Activated B cell treated with CpG ODN at 0.5 μM for 24 hours (primary cell): ENCODE measurements at regions of chr2 and their contacts with region 1.

Region 1: DNA sequence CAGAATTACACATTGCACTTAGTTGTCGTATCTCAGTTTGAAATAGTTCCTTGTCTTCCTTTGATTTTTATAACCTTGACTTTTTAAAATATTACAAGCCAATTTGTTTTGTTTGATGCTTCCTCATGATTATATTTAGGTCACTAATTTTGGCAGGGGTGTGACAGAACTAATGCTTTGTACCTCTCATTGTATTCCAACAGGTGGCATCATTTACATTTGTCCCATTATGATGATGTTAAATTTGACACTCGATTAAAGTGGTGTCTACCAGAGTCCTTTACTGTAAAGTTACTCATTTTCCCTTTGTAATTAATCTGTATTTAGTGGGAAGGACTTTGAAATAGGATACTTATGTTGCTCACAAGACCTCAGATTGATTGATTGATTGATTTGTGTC is 21.5 kb upstream of the MFSD2B start:
- DNase-seq: no peak
- ATAC-seq: no peak
- H3K4me3 Mint-ChIP-seq: no peak overlapping the region
- H3K27ac Mint-ChIP-seq: no peak overlapping the region
- H3K4me1 Mint-ChIP-seq: no peaks in the 10 kb centered on the region
- H3K27me3 Mint-ChIP-seq: no peaks in the 10 kb centered on the region
- CTCF ChIP-seq: no peak

Region 2: DNA sequence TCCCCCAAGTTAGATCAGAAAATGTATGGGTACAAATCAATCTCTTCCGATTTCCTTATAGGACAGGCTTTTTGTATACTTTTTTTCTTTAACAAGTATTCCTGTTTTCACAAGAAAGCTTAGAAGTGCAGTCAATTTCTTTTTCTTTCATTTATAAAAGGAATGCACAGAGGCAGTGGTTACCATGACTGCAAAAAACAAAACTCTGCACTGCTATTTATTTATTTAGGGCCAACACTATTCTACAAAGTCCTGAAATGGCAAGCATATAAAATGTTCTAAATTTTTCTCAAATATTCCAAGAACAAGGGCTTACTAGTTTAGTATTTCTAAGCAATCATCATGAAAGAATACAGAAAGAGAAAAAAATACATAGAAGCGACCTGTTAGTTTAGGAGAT is 83.7 kb before region 1 on chr2:
- CTCF ChIA-PET with region 1: no interaction called
- POLR2A ChIA-PET with region 1: interaction called, 10 read pairs
- intact Hi-C with region 1: no loop called
- DNase-seq: no peak
- ATAC-seq: no peak
- H3K4me3 Mint-ChIP-seq: no peak overlapping the region
- H3K27ac Mint-ChIP-seq: no peak overlapping the region
- H3K4me1 Mint-ChIP-seq: peaks cover 36% of the 10 kb centered on the region
- H3K27me3 Mint-ChIP-seq: no peaks in the 10 kb centered on the region
- CTCF ChIP-seq: no peak